ENCODE measurements at regions of chr12 and their contacts with region 1.

Region 1: DNA sequence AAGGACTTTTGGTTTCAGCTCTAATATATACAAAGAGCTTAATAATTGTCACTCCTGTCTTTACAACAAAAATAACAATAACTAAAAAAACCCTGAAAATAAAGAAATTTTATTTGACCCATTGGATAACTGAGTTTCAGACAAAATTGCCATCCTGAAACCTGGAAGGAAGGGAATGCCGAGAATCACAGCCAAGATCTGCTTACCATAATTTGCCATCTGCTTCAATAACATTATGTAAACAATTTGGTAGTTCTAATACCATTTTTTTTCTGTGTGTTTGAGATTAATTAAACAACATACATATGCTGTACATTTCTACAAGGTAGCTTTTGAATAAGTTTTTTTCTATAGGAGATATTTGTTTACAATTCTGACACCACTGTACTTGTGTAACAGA is 596.3 kb upstream of the MGAT4C start:
- DNase-seq: no peak
- ATAC-seq: no peak
- H3K4me3 ChIP-seq: no peak overlapping the region
- H3K27ac ChIP-seq: no peak overlapping the region
- H3K4me1 ChIP-seq: no peaks in the 10 kb centered on the region
- H3K27me3 ChIP-seq: no peaks in the 10 kb centered on the region
- CTCF ChIP-seq: no peak

Region 2: GRCh38 chr12:86143162-86143561 is 709.3 kb before region 1 on chr12:
- CTCF ChIA-PET with region 1: no interaction called
- POLR2A ChIA-PET with region 1: interaction called, 14 read pairs
- intact Hi-C with region 1: no loop called
- DNase-seq: no peak
- ATAC-seq: no peak
- H3K4me3 ChIP-seq: no peak overlapping the region
- H3K27ac ChIP-seq: no peak overlapping the region
- H3K4me1 ChIP-seq: peaks cover 4% of the 10 kb centered on the region; the same call in 1 of the 2 replicates
- H3K27me3 ChIP-seq: no peaks in the 10 kb centered on the region
- CTCF ChIP-seq: no peak